Activated naive CD4-positive, alpha-beta T cell treated with anti-CD3 and anti-CD28 coated beads, Interleukin-2, amount 10 ng/mL, durations not matched to agents 7 days and 5 days (primary cell): ENCODE measurements at regions of chr22 and their contacts with region 1.

Region 1: DNA sequence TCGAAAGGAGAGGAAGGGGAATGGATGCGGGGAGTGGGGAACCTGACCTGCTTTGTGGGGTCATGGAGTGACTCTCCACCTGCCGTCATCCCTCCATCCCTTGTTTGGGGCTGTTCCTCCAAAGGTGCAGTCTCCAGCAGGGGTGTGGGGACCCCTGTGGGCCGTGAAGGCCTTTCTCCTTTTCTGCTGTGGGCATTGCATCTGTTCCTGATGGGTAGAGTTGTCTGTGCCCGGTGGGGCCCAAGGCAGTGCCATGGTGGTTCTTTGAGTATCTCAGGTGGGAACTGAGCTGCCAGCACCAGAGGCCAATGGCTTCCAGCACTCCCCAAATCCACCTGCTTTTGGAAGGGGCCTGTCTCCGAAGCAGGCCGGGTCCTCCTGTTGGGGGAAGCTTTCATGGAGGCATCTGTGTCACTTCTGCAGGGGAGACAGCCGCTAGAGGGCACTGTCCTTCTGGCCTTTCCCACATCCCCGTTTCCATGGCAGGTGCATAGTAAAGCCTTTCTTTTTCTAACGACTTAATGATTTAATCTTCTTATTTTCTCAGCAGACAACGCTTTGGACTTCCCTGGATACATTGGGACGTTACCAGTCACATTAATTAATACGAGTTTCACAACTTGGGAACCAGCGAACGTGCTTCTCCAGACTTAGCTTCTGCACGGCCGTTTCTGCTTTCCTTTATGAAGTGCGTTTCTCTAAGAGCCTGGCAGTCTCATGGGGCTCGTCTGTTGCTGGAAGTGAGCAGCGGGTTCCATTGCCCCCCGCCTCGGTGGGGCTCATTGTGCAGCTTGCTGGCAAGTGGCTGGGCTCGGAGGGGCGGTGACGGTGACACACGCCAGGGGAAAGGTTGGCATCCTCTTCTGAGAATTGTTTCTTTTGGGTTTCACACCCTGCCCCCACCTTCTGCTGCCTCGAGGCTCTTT is 57.1 kb downstream of the PARVB start:
- DNase-seq: peak; percentile 84
- H3K4me3 Mint-ChIP-seq: no peak overlapping the region
- H3K27ac Mint-ChIP-seq: no peak overlapping the region
- H3K4me1 Mint-ChIP-seq: no peaks in the 10 kb centered on the region
- H3K27me3 Mint-ChIP-seq: no peaks in the 10 kb centered on the region

Region 2: GRCh38 chr22:43681731-43682360 is 399.4 kb before region 1 on chr22:
- CTCF ChIA-PET with region 1: no interaction called
- DNase-seq: no peak
- H3K4me3 Mint-ChIP-seq: no peak overlapping the region
- H3K27ac Mint-ChIP-seq: no peak overlapping the region
- H3K4me1 Mint-ChIP-seq: no peaks in the 10 kb centered on the region
- H3K27me3 Mint-ChIP-seq: peaks cover 4% of the 10 kb centered on the region

Region 3: GRCh38 chr22:44057401-44057987 is 23.7 kb before region 1 on chr22:
- CTCF ChIA-PET with region 1: no interaction called
- DNase-seq: no peak
- H3K4me3 Mint-ChIP-seq: no peak overlapping the region
- H3K27ac Mint-ChIP-seq: no peak overlapping the region
- H3K4me1 Mint-ChIP-seq: peaks cover 4% of the 10 kb centered on the region
- H3K27me3 Mint-ChIP-seq: no peaks in the 10 kb centered on the region

Region 4: DNA sequence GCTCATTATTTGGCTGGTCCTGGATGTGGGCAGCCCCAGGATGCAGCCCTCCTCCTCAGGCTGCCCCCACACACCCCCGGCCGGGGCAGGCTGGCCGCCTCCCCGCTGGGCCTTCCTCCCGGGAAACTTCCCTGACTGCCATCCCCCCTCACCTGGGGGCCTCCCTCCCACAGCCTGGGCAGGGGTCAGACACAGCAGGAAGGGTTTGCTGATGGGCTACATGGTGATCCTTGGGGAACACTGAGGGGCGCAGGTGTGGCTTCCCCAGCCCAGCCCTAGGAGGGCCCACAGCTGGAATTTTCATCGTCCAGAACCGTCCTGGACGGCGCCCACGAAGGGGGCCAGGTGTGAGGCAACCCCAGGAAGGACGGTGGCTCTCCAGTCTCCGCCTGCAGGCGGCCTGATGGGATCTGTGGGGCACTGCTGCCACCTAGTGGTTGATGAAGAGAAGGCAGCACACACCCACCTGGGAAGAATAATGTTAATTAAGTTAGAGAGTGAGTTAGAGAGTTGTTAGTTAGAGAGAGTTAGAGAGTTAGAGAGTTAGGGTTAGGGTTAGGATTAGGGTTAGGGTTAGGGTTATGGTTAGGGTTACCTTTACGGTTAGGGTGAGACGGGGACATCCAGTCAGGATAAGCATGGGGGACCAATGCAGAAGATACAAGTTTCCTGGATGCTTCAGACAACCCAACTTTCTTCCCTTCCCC is 544.9 kb after region 1 on chr22:
- CTCF ChIA-PET with region 1: interaction called, 19 read pairs
- DNase-seq: peak; percentile 85
- H3K4me3 Mint-ChIP-seq: no peak overlapping the region
- H3K27ac Mint-ChIP-seq: no peak overlapping the region
- H3K4me1 Mint-ChIP-seq: peaks cover 4% of the 10 kb centered on the region
- H3K27me3 Mint-ChIP-seq: peaks cover 36% of the 10 kb centered on the region